ENCODE measurements at regions of chr6 and their contacts with region 1.

Region 1: GRCh38 chr6:21922086-21922485 is 328.5 kb downstream of the SOX4 start:
- DNase-seq: no peak
- H3K4me3 ChIP-seq: no peak overlapping the region
- CTCF ChIP-seq: no peak
- POLR2A ChIP-seq: no peak

Region 2: DNA sequence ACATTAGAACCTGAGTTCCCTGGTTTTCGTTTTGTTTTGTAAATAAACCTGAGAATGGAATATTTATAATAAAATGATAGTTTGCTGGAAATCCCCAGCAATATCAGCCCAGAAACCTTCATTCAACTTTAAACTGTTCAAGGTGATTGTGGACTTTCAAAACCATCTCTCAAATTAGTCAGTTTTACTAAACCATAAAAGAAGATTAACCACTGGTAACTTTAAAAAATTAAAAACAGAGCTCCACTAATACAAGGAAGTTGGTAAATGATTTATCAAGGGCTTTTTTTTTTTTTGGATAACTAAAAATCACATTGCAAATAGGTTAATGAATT is 1719.8 kb before region 1 on chr6:
- intact Hi-C with region 1: no loop called
- DNase-seq: no peak
- H3K4me3 ChIP-seq: no peak overlapping the region
- CTCF ChIP-seq: no peak
- POLR2A ChIP-seq: no peak

Region 3: GRCh38 chr6:21900730-21901129 is 21.4 kb before region 1 on chr6:
- intact Hi-C with region 1: no loop called
- DNase-seq: no peak
- H3K4me3 ChIP-seq: no peak overlapping the region
- CTCF ChIP-seq: no peak
- POLR2A ChIP-seq: no peak

Region 4: DNA sequence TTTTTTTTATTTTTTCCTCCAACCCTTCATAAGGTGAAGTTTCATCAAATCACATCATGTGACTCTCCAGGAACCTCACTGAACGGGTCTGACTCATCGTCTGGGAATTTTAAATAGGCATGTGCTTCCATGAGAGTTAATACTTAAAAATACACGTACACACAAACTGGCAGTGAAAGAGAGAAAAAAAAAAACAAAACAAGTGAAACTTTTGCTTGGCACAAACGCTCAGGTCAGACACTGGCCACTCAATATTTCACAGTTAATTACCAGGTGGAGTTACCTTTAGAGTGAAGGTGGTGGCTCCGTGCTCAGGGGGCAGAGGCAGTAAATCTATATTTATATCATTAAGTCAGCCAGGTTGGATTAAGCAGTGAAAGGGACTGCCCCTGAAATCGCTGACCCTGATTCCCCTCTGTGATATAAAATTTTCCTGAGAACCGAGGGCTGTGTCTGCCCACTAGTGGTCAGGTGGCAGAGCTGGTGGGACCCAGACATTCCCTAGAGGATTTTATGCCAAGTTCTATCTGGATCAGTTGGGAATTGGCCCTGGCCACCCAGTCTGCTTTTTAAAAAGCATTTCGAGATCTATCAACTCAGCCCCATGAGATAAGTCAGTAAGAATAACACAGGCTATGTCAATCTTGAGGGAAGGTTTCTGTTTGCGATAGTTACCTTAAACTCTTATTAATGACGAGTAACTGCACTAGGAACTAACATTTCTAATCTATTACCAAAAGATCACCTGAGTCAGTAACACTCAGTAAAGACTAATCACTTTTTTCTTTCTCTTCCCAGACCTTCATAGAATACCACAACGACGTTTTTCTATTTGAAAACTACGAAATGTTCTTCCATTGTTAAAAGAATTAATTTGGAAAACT is 906.3 kb after region 1 on chr6:
- intact Hi-C with region 1: loop called (anchors 5 kb)
- DNase-seq: peak in 1 of 2 donors; percentile 43
- H3K4me3 ChIP-seq: no peak overlapping the region
- CTCF ChIP-seq: no peak
- POLR2A ChIP-seq: no peak

Measured in lower leg skin (tissue), 4 donors.